A549 (cell line): ENCODE measurements at regions of chr20 and their contacts with region 1.

Region 1: DNA sequence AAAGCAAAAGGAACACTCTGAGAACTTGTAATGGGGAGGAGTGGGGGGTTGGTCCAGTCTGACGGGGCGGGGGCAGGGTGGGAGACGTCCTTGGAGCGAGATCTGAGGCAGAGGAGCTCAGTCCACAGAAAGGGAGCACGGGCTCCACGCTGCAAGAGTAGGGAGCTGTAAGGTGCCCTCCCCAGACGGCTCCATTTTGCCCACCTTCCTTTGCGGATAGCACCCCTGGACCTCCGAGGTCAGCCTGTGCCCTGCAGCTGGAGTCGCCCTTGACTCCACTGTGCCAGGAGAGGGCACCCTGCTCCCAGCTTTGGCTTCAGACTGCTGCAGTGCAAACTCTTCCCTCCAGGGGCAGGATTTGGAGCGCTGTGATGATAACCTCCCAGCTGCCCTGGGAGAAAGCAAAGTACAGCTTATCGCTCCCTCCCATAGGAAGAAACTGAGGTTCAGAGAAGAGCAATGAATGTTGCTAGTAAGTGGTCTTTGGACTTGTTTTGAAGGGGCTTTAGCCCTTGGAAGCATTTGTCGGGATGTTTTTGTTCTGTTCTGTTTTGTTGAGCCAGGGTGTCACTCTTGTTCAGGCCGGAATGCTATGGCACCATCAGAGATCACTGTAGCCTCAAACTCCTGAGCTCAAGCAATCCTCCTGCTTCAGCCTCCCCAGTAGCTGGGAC is 9.5 kb upstream of the AHCY start:
- DNase-seq: peak; percentile 79 to 90
- ATAC-seq: peak; percentile 92 to 94
- H3K4me3 ChIP-seq: peak overlapping the region; percentile 38
- H3K27ac ChIP-seq: peak overlapping the region; percentile 54 to 80
- H3K4me1 ChIP-seq: peaks cover 41% of the 10 kb centered on the region
- CTCF ChIP-seq: peak; percentile 100
- EP300 ChIP-seq: no peak
- POLR2A ChIP-seq: no peak
- RAD21 ChIP-seq: peak; percentile 100

Region 2: GRCh38 chr20:34045294-34045693 is 267.4 kb before region 1 on chr20:
- CTCF ChIA-PET with region 1: no interaction called
- POLR2A ChIA-PET with region 1: no interaction called
- DNase-seq: no peak
- ATAC-seq: no peak
- H3K4me3 ChIP-seq: no peak overlapping the region
- H3K27ac ChIP-seq: no peak overlapping the region
- H3K4me1 ChIP-seq: peaks cover 12% of the 10 kb centered on the region; the same call in 2 of the 3 replicates
- CTCF ChIP-seq: no peak
- EP300 ChIP-seq: no peak
- POLR2A ChIP-seq: no peak
- RAD21 ChIP-seq: no peak

Region 3: DNA sequence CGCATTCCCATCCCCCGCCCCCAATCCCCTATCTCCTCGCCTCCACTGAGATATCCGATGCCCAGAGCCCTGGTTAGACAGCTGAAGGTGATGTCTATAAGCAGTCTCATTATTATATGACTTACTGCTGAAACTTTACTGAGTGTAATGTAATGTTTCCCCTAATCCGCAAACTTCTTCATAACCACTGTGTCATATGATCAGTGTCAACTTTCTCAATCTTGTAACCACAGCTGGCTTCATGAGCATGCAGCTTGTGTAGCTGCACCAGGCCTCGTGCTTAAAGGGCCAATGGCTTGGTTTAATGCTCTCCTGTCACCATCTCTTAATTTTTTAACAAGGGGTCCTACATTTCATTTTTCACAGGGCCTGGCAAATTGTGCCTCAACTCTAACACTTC is 63.4 kb before region 1 on chr20:
- CTCF ChIA-PET with region 1: no interaction called
- POLR2A ChIA-PET with region 1: no interaction called
- DNase-seq: no peak
- ATAC-seq: no peak
- H3K4me3 ChIP-seq: no peak overlapping the region
- H3K27ac ChIP-seq: no peak overlapping the region
- H3K4me1 ChIP-seq: no peaks in the 10 kb centered on the region
- CTCF ChIP-seq: no peak
- EP300 ChIP-seq: no peak
- POLR2A ChIP-seq: no peak
- RAD21 ChIP-seq: no peak

Region 4: DNA sequence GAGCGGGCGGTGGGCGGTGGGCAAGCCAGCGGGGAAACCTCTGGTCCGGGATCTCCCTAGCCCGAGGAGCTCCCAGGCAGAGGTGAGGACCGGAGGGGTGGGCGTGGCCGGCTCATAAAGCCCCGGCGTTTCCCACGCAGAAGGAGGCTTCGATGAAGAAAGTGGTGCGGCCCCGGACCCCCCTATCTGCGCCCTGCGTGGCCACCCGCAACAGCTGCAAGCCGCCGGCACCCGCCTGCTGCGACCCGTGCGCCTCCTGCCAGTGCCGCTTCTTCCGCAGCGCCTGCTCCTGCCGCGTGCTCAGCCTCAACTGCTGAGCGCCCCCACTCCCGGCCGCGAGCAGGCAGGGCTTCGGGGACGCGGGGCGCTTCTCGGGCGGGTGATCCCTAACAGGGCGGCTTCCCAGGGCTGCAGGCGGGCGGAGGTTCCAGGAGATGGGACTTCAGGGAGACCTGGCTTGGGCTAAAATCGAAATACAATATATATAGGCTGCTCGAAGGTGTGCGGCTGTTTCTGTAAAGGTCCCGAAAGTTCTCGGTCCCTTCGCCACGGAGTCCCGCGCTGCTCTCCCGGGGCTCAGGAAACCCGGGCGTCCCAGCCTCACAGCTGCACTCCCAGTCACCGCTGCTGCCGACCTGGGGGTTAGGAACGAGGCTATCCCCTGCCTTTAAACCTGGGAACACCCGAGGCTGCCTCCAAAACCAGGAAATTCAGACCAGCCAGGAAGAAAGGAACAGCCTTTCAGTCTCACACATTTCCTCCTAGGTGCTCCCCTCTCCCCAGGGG is 43.6 kb before region 1 on chr20:
- CTCF ChIA-PET with region 1: no interaction called
- POLR2A ChIA-PET with region 1: no interaction called
- DNase-seq: no peak
- ATAC-seq: peak in 1 of 2 experiments; percentile 10; a peak in 2 of 6 replicates
- H3K4me3 ChIP-seq: no peak overlapping the region
- H3K27ac ChIP-seq: no peak overlapping the region
- H3K4me1 ChIP-seq: no peaks in the 10 kb centered on the region
- CTCF ChIP-seq: no peak
- EP300 ChIP-seq: no peak
- POLR2A ChIP-seq: no peak
- RAD21 ChIP-seq: no peak

Region 5: GRCh38 chr20:34324541-34324940 is 11.9 kb after region 1 on chr20:
- CTCF ChIA-PET with region 1: interaction called, 46 read pairs
- POLR2A ChIA-PET with region 1: no interaction called
- DNase-seq: no peak
- ATAC-seq: no peak
- H3K4me3 ChIP-seq: no peak overlapping the region
- H3K27ac ChIP-seq: no peak overlapping the region
- H3K4me1 ChIP-seq: no peaks in the 10 kb centered on the region
- CTCF ChIP-seq: no peak
- EP300 ChIP-seq: no peak
- POLR2A ChIP-seq: no peak
- RAD21 ChIP-seq: no peak

Region 6: GRCh38 chr20:34385464-34385863 is 72.8 kb after region 1 on chr20:
- CTCF ChIA-PET with region 1: interaction called, 33 read pairs
- POLR2A ChIA-PET with region 1: interaction called, 3 read pairs
- DNase-seq: no peak
- ATAC-seq: no peak
- H3K4me3 ChIP-seq: no peak overlapping the region
- H3K27ac ChIP-seq: peak overlapping the region in 1 of 2 experiments; percentile 56; a peak in 2 of 6 replicates
- H3K4me1 ChIP-seq: peaks cover 65% of the 10 kb centered on the region
- CTCF ChIP-seq: no peak
- EP300 ChIP-seq: no peak
- POLR2A ChIP-seq: no peak
- RAD21 ChIP-seq: no peak

Region 7: DNA sequence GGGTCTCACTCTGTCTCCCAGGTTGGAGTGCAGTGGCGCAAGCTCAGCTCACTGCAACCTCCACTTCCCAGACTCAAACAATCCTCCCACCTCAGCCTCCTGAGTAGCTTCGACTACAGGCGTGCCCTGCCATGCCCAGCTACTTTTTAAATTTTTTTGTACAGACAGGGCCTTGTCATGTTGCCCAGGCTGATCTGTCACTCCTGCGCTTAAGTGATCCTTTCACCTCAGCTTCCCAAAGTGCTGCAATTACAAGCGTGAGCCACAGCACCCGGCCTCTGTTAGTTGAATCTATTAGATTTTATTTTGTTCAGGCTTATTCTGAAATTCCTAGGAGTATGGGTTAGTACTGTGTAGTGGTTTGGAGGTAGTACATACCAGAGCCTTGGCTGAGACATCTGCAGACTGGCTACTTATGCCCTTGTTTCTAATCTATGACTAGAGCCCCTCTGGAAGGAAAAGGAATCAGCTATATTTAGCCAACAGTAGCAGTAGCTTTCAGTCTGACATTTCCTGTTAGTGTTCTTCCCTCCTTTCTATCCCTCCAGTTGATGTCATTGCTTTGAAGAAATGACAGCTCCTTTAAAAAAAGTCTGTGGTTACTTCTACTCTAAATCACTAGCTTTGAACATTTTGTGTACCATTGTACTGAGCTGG is 124.8 kb after region 1 on chr20:
- CTCF ChIA-PET with region 1: interaction called, 35 read pairs
- POLR2A ChIA-PET with region 1: no interaction called
- DNase-seq: no peak
- ATAC-seq: no peak
- H3K4me3 ChIP-seq: no peak overlapping the region
- H3K27ac ChIP-seq: no peak overlapping the region; a peak in 1 of 6 replicates
- H3K4me1 ChIP-seq: no peaks in the 10 kb centered on the region
- CTCF ChIP-seq: no peak
- EP300 ChIP-seq: no peak
- POLR2A ChIP-seq: no peak
- RAD21 ChIP-seq: no peak

Region 8: DNA sequence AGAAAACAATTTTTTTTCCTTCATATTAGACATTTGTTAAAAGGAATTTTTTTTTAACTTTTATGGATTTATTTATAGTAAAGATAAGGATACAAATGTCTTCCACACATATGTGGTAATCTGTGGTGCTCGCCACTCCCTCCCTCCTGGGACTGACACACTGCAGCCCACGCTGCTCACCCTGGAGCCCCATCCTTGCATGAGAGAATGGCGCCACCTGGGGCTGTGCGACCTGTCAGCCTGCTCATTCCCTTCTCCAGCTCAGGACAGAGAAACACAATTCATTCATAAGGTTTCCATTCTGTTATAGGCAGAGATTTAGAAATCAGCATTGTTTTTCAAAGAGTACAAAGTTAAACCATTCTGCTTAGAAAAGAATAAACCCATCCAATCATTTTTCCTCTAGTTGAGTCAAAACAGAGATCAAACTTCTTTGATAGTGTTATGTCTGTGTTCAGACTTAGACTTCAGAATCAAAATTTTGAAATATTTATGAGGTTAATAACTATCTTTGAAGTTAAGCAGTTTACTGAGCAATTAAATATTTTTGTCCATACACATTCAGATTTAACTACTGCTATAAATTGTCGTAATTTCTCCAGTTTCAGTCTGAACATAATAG is 160.7 kb after region 1 on chr20:
- CTCF ChIA-PET with region 1: interaction called, 65 read pairs
- POLR2A ChIA-PET with region 1: interaction called, 4 read pairs
- DNase-seq: peak; percentile 44 to 74
- ATAC-seq: peak; percentile 94 to 95
- H3K4me3 ChIP-seq: no peak overlapping the region
- H3K27ac ChIP-seq: no peak overlapping the region
- H3K4me1 ChIP-seq: peaks cover 14% of the 10 kb centered on the region
- CTCF ChIP-seq: peak; percentile 65
- EP300 ChIP-seq: no peak
- POLR2A ChIP-seq: no peak
- RAD21 ChIP-seq: peak; percentile 73 to 86

Region 9: DNA sequence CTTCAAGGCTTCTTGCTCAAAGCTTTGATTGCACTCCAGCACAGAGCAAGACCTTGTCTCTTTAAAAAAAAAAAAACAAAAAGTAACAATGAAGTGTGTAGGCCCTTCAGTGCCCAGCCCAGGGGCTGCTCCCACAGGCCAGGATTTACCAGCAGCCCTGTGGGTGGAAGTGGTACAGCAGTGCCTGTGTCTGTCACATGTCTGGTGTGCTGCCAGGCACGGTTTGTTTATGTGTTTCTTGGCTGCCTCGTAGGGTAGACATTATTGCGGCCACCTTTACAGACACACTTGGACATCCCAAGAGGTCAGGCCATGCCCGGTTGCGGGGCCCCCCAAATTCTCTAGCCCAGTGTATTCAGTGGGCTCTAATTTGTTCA is 216.2 kb after region 1 on chr20:
- CTCF ChIA-PET with region 1: interaction called, 106 read pairs
- POLR2A ChIA-PET with region 1: no interaction called
- DNase-seq: no peak
- ATAC-seq: no peak
- H3K4me3 ChIP-seq: no peak overlapping the region
- H3K27ac ChIP-seq: peak overlapping the region in 1 of 2 experiments; percentile 5; a peak in 1 of 6 replicates
- H3K4me1 ChIP-seq: peaks cover 40% of the 10 kb centered on the region
- CTCF ChIP-seq: no peak
- EP300 ChIP-seq: no peak
- POLR2A ChIP-seq: no peak
- RAD21 ChIP-seq: no peak

Region 10: GRCh38 chr20:34768096-34768495 is 455.4 kb after region 1 on chr20:
- CTCF ChIA-PET with region 1: interaction called, 14 read pairs
- POLR2A ChIA-PET with region 1: no interaction called
- DNase-seq: no peak
- ATAC-seq: no peak
- H3K4me3 ChIP-seq: no peak overlapping the region
- H3K27ac ChIP-seq: no peak overlapping the region
- H3K4me1 ChIP-seq: no peaks in the 10 kb centered on the region
- CTCF ChIP-seq: no peak
- EP300 ChIP-seq: no peak
- POLR2A ChIP-seq: no peak
- RAD21 ChIP-seq: no peak